ENCODE measurements at regions of chr3 and their contacts with region 1.

Region 1: GRCh38 chr3:107938143-107938542 is 152.7 kb downstream of the CD47 start:
- DNase-seq: peak; percentile 53
- H3K4me3 Mint-ChIP-seq: no peak overlapping the region
- H3K27ac Mint-ChIP-seq: no peak overlapping the region
- H3K4me1 Mint-ChIP-seq: peaks cover 9% of the 10 kb centered on the region
- H3K27me3 Mint-ChIP-seq: no peaks in the 10 kb centered on the region
- CTCF ChIP-seq: peak; percentile 48

Region 2: DNA sequence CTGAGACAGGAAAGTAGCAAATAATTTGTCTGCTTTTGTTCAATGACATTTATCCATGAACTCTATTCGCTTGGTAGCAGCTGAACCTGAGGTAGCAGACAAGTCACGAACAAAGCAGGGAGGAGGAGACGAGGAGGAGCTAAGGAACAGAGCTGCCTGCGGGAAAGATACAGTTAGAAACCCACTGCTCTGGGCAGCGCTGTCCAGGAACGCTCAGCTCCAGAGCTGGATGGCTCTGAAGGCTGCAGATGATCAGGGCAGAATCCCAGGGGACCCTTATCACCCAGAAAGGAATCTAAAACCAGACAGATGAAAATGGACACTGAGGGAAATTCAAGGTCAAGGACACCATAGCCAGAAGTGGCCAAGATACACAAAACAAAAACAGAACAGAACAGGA is 105.1 kb before region 1 on chr3:
- CTCF ChIA-PET with region 1: no interaction called
- POLR2A ChIA-PET with region 1: no interaction called
- intact Hi-C with region 1: no loop called
- DNase-seq: no peak
- H3K4me3 Mint-ChIP-seq: no peak overlapping the region
- H3K27ac Mint-ChIP-seq: no peak overlapping the region
- H3K4me1 Mint-ChIP-seq: no peaks in the 10 kb centered on the region
- H3K27me3 Mint-ChIP-seq: no peaks in the 10 kb centered on the region
- CTCF ChIP-seq: no peak

Region 3: DNA sequence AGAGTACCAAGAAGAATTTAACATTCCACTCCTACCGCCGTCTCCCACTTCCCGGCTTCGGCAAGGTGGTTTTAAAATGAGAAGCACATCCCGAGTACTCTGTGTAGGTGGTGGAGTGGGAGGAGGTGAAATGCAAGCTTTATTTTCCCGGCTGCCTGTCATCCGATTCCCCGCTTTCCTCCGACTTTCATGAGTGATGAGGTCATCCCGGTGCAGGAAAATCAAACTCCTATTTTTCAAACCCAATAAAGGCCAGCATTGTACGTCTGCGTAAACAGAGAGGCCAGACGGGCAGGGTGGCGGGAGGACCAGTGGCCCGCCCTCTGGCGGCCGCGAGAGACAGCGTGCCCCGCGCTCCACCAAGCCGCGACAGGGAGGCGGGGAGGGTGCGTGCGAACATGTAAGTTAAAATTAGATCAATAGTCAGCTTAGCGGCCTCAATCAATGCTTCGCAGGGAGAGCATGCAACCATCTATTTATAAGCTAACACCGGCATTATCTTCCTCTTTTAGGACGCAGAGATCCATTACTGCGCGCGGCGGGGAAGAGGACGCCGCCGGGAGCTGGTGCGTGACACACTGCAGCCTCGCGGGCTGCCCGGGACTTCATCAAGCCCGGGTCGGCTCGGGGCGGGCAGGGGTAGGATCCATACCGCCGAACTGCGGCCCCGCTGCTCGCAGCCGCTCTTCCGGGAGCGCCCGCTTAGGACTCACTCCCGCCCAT is 10.6 kb before region 1 on chr3:
- CTCF ChIA-PET with region 1: interaction called, 16 read pairs
- POLR2A ChIA-PET with region 1: no interaction called
- intact Hi-C with region 1: no loop called
- DNase-seq: peak; percentile 62
- H3K4me3 Mint-ChIP-seq: peak overlapping the region; percentile 71
- H3K27ac Mint-ChIP-seq: no peak overlapping the region
- H3K4me1 Mint-ChIP-seq: no peaks in the 10 kb centered on the region
- H3K27me3 Mint-ChIP-seq: no peaks in the 10 kb centered on the region
- CTCF ChIP-seq: peak; percentile 80

Region 4: DNA sequence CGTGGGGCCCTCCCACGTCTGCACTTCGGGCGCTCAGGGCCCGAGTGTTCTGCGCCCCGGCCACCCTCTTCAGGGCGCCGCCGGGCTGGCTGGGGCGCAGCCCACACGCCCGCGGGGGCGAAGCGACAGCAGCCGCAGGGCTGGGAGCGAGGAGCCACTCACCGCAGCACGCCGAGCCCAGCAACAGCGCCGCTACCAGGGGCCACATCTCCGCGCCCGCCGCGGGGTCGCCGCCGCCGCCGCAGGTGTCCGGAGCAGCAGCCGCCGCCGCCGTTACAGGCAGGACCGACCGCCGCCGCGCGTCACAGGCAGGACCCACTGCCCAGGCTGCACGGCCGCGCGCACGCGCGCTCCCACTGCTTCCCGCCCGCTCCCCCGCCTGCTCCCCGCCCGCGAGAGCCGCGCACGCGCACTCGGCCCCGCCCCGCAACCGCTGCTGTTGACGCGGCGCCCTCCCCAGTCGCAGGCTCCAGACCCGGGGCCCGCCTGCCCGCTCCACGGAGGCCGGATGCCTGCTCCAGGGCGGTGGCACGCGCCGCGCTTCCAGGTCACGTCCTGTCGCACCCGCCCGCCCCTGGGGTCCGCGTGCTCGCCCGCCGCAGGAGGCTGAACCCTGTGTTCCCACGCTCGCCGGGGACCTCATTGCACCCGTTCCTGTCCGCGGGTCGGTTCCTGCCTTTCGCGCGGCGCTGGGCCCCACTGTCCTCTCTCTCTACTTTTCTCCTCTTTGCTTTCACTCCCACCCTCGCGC is 152.7 kb after region 1 on chr3 and contains the start of gene CD47:
- CTCF ChIA-PET with region 1: interaction called, 7 read pairs
- POLR2A ChIA-PET with region 1: no interaction called
- intact Hi-C with region 1: loop called (anchors 1 kb)
- DNase-seq: peak; percentile 79
- H3K4me3 Mint-ChIP-seq: peak within 1 kb of the TSS; percentile 95
- H3K27ac Mint-ChIP-seq: peak within 1 kb of the TSS; percentile 88
- H3K4me1 Mint-ChIP-seq: peaks cover 5% of the 10 kb centered on the region
- H3K27me3 Mint-ChIP-seq: no peaks in the 10 kb centered on the region
- CTCF ChIP-seq: no peak
- total RNA-seq, gene CD47: 28.5 and 31.5 TPM in 2 replicates

Region 5: DNA sequence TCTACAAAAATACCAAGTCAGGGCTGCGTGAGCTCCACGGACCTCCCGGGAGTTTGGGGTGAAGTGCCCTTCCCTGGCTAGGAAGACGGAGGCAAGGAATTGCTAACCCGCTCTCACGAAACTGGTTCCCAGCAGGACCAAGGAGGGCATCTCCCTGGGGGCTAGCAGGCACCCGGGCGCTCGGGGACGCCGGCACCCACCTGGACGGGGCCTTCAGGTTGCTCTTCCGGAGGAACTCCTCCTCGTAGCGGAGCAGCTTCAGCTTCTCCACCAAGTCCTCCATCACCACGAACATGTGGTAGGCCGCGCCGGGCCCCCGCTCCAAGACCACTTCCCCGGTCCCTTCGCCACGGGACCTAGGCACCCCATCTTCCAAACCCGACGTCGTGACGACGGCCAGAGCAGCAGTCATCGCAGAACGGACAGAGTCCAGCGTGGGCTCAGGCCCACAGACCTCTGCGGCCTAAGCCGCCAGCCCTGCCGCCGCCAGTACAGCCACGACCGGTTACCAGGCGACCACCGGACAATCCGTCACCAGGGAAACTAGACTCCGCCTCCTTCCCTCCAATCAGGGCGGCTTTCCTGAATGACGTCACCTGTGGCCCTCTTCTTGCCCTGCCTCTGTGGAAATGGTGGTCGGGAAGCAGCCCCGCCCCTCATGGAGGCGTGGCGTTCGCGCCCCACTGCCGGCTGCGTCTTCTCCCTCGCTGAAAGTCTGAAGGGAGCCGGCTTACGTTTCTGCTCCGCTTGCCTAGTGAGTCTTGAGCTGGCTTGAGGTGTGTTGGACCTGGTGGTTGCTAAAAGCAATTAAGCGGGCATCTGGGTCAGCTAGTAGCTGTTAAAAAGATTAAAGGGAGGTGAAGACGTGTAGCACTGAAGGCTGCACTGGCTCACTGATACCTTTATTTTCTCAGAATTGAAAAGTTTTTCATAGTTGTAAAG is 284.0 kb after region 1 on chr3 and contains the start of gene IFT57:
- CTCF ChIA-PET with region 1: interaction called, 3 read pairs
- POLR2A ChIA-PET with region 1: no interaction called
- intact Hi-C with region 1: loop called (anchors 5 kb)
- DNase-seq: peak; percentile 97
- H3K4me3 Mint-ChIP-seq: peak within 1 kb of the TSS; percentile 100
- H3K27ac Mint-ChIP-seq: peak within 1 kb of the TSS; percentile 100
- H3K4me1 Mint-ChIP-seq: peaks cover 31% of the 10 kb centered on the region
- H3K27me3 Mint-ChIP-seq: no peaks in the 10 kb centered on the region
- CTCF ChIP-seq: no peak
- total RNA-seq, gene IFT57: 38.9 and 46.6 TPM in 2 replicates

Region 6: DNA sequence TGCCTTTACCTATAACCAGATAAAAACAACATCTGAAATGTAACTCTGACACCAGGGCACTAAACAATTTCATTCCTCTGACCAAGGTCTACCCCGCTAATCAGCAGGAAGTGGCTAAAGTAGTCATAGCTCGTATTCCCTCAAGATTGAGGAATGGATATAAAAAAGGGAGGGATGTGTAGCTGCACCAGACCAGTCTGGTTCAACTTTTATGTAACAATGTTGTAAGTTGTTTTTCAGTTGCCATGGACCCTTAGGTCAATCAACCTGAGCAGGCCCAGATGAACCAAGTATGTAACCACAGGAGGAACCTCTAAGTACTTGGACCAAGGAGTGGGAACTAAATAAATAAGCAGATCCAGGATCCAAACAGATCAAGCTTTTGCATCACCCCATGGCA is 312.5 kb after region 1 on chr3:
- CTCF ChIA-PET with region 1: no interaction called
- POLR2A ChIA-PET with region 1: no interaction called
- intact Hi-C with region 1: no loop called
- DNase-seq: no peak
- H3K4me3 Mint-ChIP-seq: no peak overlapping the region
- H3K27ac Mint-ChIP-seq: no peak overlapping the region
- H3K4me1 Mint-ChIP-seq: no peaks in the 10 kb centered on the region
- H3K27me3 Mint-ChIP-seq: no peaks in the 10 kb centered on the region
- CTCF ChIP-seq: no peak

Region 7: DNA sequence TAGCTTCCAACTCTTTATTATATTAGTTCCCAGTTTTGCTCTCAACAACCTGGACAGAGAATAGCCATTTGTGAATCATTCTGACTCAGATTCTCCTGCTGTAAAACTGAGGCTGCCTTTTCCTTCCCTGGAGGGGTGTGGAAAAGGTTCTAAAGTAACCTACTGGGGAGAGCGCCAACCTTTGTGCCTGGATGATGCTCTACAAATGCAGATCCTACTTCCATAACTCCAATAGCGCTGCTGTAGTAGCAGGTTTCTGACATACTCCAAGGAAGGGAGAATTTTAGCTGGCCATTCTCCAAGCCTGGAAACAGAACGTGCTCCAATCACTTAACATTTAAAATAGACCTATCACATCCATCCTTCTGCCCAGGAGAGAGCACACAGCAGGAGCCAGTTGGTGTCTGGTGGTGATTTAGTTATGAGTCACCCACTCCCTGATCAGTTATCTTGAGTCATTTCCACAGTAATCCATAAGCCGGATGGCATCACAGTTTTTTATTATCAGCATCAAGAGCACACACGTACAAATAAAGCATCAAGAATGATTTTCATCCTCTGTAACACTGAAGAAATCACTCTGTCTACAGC is 534.0 kb after region 1 on chr3:
- CTCF ChIA-PET with region 1: interaction called, 12 read pairs
- POLR2A ChIA-PET with region 1: interaction called, 3 read pairs
- intact Hi-C with region 1: loop called (anchors 1 kb)
- DNase-seq: peak; percentile 82
- H3K4me3 Mint-ChIP-seq: no peak overlapping the region
- H3K27ac Mint-ChIP-seq: peak overlapping the region; percentile 55
- H3K4me1 Mint-ChIP-seq: peaks cover 21% of the 10 kb centered on the region
- H3K27me3 Mint-ChIP-seq: no peaks in the 10 kb centered on the region
- CTCF ChIP-seq: no peak

Region 8: DNA sequence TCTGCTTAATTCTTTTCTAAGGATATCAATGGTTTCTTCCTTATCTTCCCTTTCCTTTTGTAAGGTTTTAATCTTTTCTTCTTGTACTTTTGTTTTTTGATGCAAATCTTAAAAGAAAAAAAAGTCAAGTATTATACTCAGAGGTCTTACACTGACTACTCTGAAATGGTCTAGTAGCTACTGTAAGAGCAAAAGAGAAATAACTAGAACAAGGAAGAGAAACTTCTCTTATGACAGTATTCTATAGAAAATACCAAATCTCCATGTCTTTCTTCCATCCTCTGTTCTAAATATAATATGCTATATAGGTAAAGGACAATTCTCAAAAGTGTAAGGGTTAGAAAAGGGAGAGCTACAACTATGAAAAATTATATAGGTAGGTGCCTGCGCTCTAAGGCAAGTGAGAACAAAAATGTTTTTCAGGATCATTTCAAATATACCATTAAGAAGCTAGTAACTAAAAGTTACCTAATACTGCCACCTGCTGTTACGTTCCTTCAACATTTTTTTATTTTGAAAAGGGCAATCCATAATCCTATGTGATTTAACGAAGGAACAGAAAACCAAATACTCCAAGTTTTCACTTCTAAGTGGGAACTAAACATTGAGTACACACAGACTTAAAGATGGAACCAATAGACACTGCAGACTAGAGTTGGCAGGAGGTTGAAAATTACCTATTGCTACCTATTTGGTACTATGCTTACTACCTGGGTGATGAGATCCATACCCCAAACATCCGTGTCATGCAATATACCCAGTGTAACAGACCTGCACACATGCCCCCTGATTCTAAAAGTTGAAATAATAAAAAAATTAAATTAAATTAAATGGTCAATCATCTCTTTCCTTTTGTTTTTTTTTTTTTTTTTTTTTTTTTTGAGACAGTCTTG is 614.4 kb after region 1 on chr3:
- CTCF ChIA-PET with region 1: interaction called, 4 read pairs
- POLR2A ChIA-PET with region 1: no interaction called
- intact Hi-C with region 1: loop called (anchors 2 kb)
- DNase-seq: peak; percentile 61
- H3K4me3 Mint-ChIP-seq: no peak overlapping the region
- H3K27ac Mint-ChIP-seq: peak overlapping the region; percentile 28
- H3K4me1 Mint-ChIP-seq: peaks cover 7% of the 10 kb centered on the region
- H3K27me3 Mint-ChIP-seq: no peaks in the 10 kb centered on the region
- CTCF ChIP-seq: peak; percentile 40